Dendritic cell treated with granulocyte-macrophage colony-stimulating factor and Interleukin-4, amounts not matched to agents 40 ng/mL and 50 ng/mL, for 4 days (primary cell): ENCODE measurements at regions of chr10 and their contacts with region 1.

Region 1: GRCh38 chr10:58513188-58514110 is 777 bp downstream of the BICC1 start:
- H3K4me3 Mint-ChIP-seq: peak overlapping the region; percentile 77
- H3K27ac Mint-ChIP-seq: peak overlapping the region; percentile 34
- H3K4me1 Mint-ChIP-seq: peaks cover 6% of the 10 kb centered on the region
- H3K27me3 Mint-ChIP-seq: peaks cover 17% of the 10 kb centered on the region

Region 2: DNA sequence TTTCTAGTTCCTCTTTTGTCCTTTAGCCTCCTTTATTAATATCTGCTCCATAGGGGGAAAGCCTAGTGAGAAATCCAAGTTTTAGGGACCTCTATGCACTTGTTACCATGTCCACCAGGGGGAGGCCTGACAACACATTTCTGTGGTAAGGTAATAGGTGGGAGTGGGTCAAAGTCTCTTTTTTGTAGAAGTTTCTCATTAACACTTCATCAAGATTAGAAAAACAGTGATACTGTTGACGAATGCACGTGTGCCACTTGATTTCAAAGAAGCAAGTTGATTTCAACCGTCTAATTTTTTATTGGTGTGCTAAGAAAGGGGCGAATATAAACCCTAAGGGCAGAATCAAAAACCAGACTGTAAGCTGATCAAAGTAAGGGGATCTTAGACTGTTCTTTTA is 213.9 kb before region 1 on chr10:
- intact Hi-C with region 1: loop called (anchors 10 kb)
- H3K4me3 Mint-ChIP-seq: no peak overlapping the region
- H3K27ac Mint-ChIP-seq: no peak overlapping the region
- H3K4me1 Mint-ChIP-seq: no peaks in the 10 kb centered on the region
- H3K27me3 Mint-ChIP-seq: peaks cover 14% of the 10 kb centered on the region